T-cell (primary cell): ENCODE measurements at regions of chr19 and their contacts with region 1.

Region 1: DNA sequence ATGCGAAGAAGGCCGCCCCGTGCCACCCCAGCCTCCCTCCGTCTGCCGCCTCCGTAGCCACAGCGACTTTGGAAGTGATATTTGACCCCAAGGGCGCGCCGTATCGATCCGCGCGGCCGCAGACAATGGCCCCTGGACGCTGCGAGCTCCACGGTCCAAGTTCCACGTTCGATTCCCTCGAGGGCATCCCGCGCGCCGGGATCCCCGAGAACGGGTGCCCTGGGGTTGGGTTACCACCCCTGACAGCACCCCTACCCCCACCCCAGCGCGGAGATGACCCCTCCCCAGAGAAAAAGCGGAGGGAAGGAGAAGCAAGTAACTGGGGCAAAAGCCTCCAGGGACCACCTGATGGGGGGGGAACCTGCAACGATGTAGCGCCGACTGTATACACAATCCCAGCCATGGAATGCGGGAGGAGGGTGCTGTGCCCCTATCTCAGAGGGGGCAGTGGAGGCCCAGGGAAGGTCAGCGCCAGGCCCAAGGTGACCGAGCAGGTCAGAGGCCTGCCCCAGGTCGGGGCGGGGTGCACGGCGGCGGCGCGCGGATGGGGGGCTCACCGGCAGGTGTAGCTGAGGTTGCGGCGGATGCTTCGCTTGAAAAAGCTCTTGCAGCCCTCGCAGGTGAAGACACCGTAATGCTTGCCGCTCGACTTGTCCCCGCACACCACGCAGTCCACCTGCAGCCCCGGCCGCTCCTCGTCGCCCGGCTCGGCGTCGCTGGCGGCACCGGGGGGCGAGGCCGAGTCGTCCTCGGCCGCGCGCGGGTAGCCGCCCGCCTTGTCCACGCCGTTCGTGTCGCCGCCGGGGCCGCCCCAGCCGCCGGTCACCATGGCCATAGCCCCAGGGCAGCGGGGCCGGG is 1.1 kb downstream of the NR2F6 start:
- DNase-seq: peak in 4 of 35 experiments; percentile 20 to 45 (median 26)
- ATAC-seq: peak in 1 of 4 experiments; percentile 4
- H3K4me3 ChIP-seq: peak overlapping the region in 1 of 2 donors; percentile 25
- H3K4me3 Mint-ChIP-seq: peak overlapping the region; percentile 54 to 65 (median 57)
- H3K27ac ChIP-seq: no peak overlapping the region
- H3K27ac Mint-ChIP-seq: no peak overlapping the region
- H3K4me1 ChIP-seq: peaks cover 0 to 19% of the 10 kb centered on the region in 2 experiments
- H3K4me1 Mint-ChIP-seq: peaks cover 0 to 16% (median 6%) of the 10 kb centered on the region in 3 donors
- H3K27me3 ChIP-seq: peaks cover 0 to 18% of the 10 kb centered on the region in 2 experiments
- H3K27me3 Mint-ChIP-seq: peaks cover 5 to 7% of the 10 kb centered on the region in 2 donors

Region 2: GRCh38 chr19:17125062-17125714 is 119.4 kb before region 1 on chr19:
- CTCF ChIA-PET with region 1: no interaction called
- POLR2A ChIA-PET with region 1: interaction called in 1 of 2 experiments, 13 read pairs
- DNase-seq: peak in 25 of 35 experiments; percentile 3 to 86 (median 67)
- ATAC-seq: peak; percentile 66 to 82 (median 74)
- H3K4me3 ChIP-seq: peak overlapping the region; percentile 42 to 66
- H3K4me3 Mint-ChIP-seq: peak overlapping the region; percentile 76 to 92 (median 80)
- H3K27ac ChIP-seq: peak overlapping the region; percentile 96
- H3K27ac Mint-ChIP-seq: peak overlapping the region; percentile 99
- H3K4me1 ChIP-seq: peaks cover 21 to 80% of the 10 kb centered on the region in 2 experiments
- H3K4me1 Mint-ChIP-seq: peaks cover 47 to 70% (median 48%) of the 10 kb centered on the region in 3 donors
- H3K27me3 ChIP-seq: no peaks in the 10 kb centered on the region
- H3K27me3 Mint-ChIP-seq: no peaks in the 10 kb centered on the region

Region 3: GRCh38 chr19:17226002-17226933 is 18.3 kb before region 1 on chr19 and contains the start of gene OCEL1:
- CTCF ChIA-PET with region 1: no interaction called
- POLR2A ChIA-PET with region 1: interaction called in 1 of 2 experiments, 12 read pairs
- DNase-seq: peak; percentile 90 to 99 (median 95)
- ATAC-seq: peak; percentile 90 to 93 (median 92)
- H3K4me3 ChIP-seq: peak within 1 kb of the TSS; percentile 60 to 73
- H3K4me3 Mint-ChIP-seq: peak within 1 kb of the TSS; percentile 85 to 95 (median 91)
- H3K27ac ChIP-seq: peak within 1 kb of the TSS; percentile 79
- H3K27ac Mint-ChIP-seq: peak within 1 kb of the TSS; percentile 97 to 99
- H3K4me1 ChIP-seq: peaks cover 0 to 23% of the 10 kb centered on the region in 2 experiments
- H3K4me1 Mint-ChIP-seq: peaks cover 7 to 15% (median 9%) of the 10 kb centered on the region in 3 donors
- H3K27me3 ChIP-seq: no peaks in the 10 kb centered on the region
- H3K27me3 Mint-ChIP-seq: no peaks in the 10 kb centered on the region
- total RNA-seq, gene OCEL1: 21.5 to 33.3 (median 23.0) TPM